Psoas muscle (tissue), 8 donors: ENCODE measurements at regions of chr14 and their contacts with region 1.

Region 1: DNA sequence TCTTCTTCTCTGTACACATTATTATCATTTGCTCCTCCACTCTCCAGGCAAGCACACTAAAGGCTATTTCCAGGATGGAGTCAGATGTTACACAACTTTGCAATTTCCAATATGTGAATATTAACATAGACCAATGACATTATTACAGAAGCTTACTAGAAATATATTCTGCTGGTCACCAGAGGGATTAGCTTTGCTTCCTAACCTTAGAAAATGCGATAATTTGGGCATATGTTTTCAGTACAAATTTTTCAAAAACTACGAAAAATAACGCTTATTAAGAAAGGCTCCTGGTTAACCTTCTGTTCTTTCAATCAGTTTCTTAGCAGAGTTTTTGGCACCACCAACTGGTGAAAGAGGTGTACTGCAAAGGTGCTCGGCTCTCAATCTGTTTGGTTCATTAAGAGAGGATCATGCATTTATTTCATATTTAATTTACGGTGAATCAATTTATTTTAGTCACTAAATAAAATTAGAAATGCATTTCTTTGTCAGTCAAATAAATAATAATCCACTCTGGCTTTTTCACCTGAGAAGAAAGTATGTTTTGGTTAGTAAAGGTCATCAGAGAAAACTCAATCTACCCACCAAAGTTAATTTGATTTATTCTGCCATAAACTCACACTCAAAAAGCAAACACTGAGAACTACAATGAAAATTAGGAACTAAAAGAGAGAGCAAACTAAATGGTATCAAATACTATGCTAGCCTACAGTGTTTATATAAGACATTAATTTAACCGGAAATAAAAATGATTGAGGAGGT is 39.2 kb downstream of the EFCAB11 start:
- DNase-seq: peak in 1 of 2 donors; percentile 27
- ATAC-seq: peak in 3 of 4 donors; percentile 67 to 86 (median 79)
- H3K4me3 ChIP-seq: peak overlapping the region; percentile 26
- H3K27ac ChIP-seq: no peak overlapping the region
- H3K4me1 ChIP-seq: peaks cover 4% of the 10 kb centered on the region
- H3K27me3 ChIP-seq: no peaks in the 10 kb centered on the region
- CTCF ChIP-seq: peak; percentile 97

Region 2: GRCh38 chr14:89027097-89027740 is 888.1 kb before region 1 on chr14:
- intact Hi-C with region 1: loop called (anchors 2 kb)
- DNase-seq: peak; percentile 65 to 72
- ATAC-seq: peak; percentile 88 to 97 (median 92)
- H3K4me3 ChIP-seq: peak overlapping the region; percentile 70
- H3K27ac ChIP-seq: no peak overlapping the region
- H3K4me1 ChIP-seq: no peaks in the 10 kb centered on the region
- H3K27me3 ChIP-seq: peaks cover 0 to 55% (median 3%) of the 10 kb centered on the region in 3 donors
- CTCF ChIP-seq: peak; percentile 75

Region 3: DNA sequence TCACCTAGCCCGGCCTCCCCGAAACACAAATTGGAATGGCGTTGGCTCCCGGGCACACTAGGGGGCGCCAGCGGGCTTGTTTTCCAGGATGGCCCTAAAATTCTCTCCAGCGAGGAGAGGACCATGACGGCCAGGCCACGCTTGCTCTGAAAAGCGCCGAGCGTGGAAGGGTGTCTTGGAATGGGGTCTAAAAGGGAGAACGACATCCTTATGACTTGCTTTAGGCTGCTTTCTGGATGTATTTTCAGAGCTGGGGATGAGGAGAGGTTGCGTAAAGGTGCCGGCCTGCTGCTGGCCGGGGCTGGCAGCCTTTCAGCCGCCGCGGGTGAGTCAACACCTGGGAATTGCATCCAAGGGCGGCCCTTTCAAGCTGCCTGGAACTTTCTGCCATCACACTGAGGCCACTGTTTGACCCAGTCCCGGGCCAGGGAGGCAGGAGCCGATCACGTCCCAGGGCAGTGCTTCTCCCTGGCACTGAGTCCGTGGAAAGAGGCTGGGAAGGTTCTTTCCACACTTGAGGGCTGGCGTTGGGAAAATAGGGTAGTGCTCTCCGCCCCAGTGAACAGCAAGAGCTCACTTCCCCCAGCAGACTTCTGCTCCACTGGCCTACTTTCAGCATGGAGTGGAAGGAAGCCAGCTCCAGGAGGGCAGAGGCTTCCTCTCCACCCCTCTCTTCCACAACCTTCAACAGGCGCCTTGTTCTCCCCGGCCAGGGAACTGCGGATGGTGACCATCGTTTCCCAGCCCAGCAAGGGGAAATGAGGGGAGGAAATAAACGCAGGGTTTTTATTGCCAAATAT is 874.6 kb before region 1 on chr14:
- intact Hi-C with region 1: loop called in 1 of 2 experiments (anchors 5 kb)
- DNase-seq: peak; percentile 91 to 94
- ATAC-seq: peak; percentile 98 to 99 (median 98)
- H3K4me3 ChIP-seq: peak overlapping the region; percentile 62
- H3K27ac ChIP-seq: peak overlapping the region; percentile 87
- H3K4me1 ChIP-seq: peaks cover 10% of the 10 kb centered on the region
- H3K27me3 ChIP-seq: no peaks in the 10 kb centered on the region
- CTCF ChIP-seq: peak; percentile 93

Region 4: GRCh38 chr14:89175881-89176799 is 739.2 kb before region 1 on chr14:
- intact Hi-C with region 1: loop called in 1 of 2 experiments (anchors 2 kb)
- DNase-seq: no peak
- ATAC-seq: no peak
- H3K4me3 ChIP-seq: no peak overlapping the region
- H3K27ac ChIP-seq: no peak overlapping the region
- H3K4me1 ChIP-seq: peaks cover 34% of the 10 kb centered on the region
- H3K27me3 ChIP-seq: no peaks in the 10 kb centered on the region
- CTCF ChIP-seq: no peak

Region 5: GRCh38 chr14:89425931-89426330 is 489.4 kb before region 1 on chr14:
- intact Hi-C with region 1: loop called (anchors 10 kb)
- DNase-seq: no peak
- ATAC-seq: peak in 3 of 4 donors; percentile 37 to 50 (median 38)
- H3K4me3 ChIP-seq: no peak overlapping the region
- H3K27ac ChIP-seq: no peak overlapping the region
- H3K4me1 ChIP-seq: peaks cover 41% of the 10 kb centered on the region
- H3K27me3 ChIP-seq: no peaks in the 10 kb centered on the region
- CTCF ChIP-seq: no peak

Region 6: GRCh38 chr14:89669193-89669592 is 246.1 kb before region 1 on chr14:
- intact Hi-C with region 1: no loop called
- DNase-seq: no peak
- ATAC-seq: no peak
- H3K4me3 ChIP-seq: no peak overlapping the region
- H3K27ac ChIP-seq: no peak overlapping the region
- H3K4me1 ChIP-seq: no peaks in the 10 kb centered on the region
- H3K27me3 ChIP-seq: no peaks in the 10 kb centered on the region
- CTCF ChIP-seq: no peak